ENCODE measurements at regions of chr5 and their contacts with region 1.

Region 1: DNA sequence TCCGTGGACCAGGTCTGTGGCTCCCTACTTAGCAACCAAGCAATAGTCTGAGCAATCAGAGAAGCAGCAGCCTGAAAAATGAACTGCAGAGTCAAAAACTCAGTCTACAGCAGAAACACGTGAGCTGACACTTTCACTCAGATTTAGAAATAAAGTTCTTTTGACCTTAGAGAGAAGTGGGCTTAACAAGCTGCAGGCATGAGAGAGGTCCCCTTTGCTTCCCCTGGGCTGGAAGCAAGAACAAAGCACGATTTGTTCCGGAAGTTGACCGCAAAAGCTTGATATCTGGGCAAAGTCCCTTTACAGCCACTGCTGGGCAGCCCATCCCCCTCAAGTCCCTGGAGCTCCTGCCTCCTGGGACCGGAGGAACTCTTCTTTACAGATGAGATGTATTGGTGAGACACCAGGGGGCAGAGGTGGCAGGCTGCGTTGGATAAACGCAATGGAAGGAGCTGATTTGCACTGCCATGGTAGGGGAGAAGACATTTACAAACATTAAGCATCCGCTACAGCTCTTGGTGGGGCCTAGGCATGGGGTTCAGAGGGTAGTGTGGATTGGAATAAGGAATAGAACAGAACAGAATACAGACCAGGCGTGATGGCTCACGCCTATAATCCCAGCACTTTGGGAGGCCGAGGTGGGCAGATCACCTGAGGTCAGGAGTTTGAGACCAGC is 5.8 kb upstream of the SOWAHA start:
- DNase-seq: peak; percentile 99
- ATAC-seq: peak; percentile 97
- H3K4me3 ChIP-seq: peak overlapping the region; percentile 64 to 85 (median 82)
- H3K27ac ChIP-seq: peak overlapping the region; percentile 100
- H3K4me1 ChIP-seq: peaks cover 58% of the 10 kb centered on the region
- H3K27me3 ChIP-seq: no peaks in the 10 kb centered on the region; a peak in 1 of 5 replicates
- CTCF ChIP-seq: peak; percentile 92
- EP300 ChIP-seq: peak; percentile 81 to 93
- POLR2A ChIP-seq: peak; percentile 81 to 95
- RAD21 ChIP-seq: peak; percentile 95

Region 2: DNA sequence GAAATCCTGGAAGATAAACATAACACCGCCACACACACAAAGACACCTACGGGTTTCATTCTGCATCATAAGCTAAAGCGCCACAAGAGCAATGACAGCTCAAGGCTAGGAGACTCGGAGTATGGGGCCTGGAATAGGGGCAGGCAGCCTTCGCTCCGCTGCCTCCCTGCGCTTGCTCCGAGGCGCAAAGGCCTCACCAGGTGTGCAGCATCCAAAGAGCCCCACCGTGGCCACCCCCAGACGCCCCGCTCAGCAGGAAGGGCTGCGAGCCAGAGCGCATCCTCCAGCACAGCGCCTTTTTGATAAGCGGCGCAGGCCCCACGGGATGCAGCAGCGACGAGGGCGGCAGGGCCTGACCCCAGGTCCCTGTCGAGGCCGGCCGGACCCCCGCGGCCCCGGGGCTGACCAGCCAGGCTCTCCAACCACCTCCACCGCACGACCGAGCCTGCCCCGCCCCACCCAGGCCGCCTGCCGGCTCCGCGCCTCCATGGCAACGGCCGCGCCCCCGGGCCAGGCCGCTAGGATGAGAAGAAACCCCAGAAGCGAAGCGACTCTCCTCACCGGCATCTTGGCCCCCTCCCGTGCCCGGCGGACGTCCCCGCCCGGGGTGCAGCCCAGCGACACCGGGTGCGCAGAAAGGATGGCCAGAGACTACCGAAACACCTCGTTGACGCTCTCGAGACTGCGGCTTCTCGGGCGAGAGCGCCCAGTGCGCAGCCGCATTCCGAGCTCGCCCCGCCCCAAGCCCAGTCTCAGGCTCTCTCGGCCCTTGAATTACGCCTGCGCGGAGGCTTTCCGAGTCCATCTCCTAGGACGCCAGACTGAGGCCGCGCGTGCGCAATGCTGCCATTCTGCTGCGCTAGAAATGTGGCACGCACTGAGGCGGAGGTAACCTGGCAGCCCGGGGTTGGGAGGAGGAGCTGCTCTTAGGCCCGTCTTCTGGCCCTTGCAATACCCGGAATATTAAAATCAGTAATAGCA is 70.2 kb before region 1 on chr5 and contains the start of gene KIF3A:
- CTCF ChIA-PET with region 1: no interaction called
- POLR2A ChIA-PET with region 1: interaction called, 17 read pairs
- in situ Hi-C with region 1: no loop called
- intact Hi-C with region 1: loop called (anchors 1 kb)
- DNase-seq: peak; percentile 95
- ATAC-seq: peak; percentile 95
- H3K4me3 ChIP-seq: peak within 1 kb of the TSS; percentile 73 to 89 (median 82)
- H3K27ac ChIP-seq: peak within 1 kb of the TSS; percentile 39
- H3K4me1 ChIP-seq: peaks cover 28% of the 10 kb centered on the region
- H3K27me3 ChIP-seq: no peaks in the 10 kb centered on the region
- CTCF ChIP-seq: peak; percentile 22; the same call in 1 of the 2 replicates
- EP300 ChIP-seq: no peak
- POLR2A ChIP-seq: peak; percentile 49 to 55; a peak in 3 of 4 replicates
- RAD21 ChIP-seq: no peak
- total RNA-seq, gene KIF3A: 8.4 and 11.3 TPM in 2 replicates

Region 3: DNA sequence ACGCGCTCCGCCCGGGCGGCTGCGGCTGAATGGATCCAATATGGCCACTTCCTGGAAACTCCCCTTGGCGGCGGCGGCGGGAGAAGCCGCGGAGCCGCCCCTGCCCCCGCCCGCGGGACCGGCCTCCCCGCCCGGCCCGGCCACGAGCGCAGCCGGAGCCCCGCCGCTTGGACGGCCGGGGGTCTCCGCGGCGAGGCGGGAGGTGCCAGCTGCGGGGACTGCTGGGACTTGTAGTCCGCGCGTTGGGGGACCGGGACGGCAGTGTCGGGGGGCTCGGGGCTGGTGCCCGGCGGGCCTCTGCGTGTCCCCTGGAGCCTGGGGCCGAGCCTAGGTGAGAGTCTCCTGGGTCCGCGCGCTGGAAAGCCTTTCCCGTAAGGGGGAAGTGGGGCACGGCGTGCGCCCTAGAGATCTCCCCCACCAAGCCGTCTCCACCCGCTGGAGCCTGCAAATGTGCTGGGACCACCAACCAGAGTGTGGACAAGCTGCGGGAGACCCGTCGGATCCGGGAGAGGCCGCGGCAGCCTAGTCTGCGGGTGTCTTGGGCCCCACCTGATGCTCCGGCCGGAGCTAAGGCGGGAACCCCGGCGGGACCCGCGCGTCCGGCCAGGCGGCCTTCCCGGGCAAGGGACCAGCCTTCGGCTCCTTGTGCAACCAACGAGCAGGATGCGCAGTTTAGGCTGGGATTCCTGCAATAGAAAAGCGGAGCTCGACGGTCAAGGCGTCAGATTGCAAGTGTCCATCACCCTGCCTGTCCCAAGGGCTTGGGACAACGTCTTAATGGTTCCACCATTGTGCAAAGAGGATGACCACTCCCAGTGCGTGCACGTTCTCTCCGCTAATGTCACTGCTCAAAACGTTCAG is 29.9 kb before region 1 on chr5 and contains the start of gene SEPTIN8:
- CTCF ChIA-PET with region 1: no interaction called
- POLR2A ChIA-PET with region 1: interaction called, 21 read pairs
- in situ Hi-C with region 1: no loop called
- intact Hi-C with region 1: loop called (anchors 2 kb)
- DNase-seq: no peak
- ATAC-seq: peak; percentile 60
- H3K4me3 ChIP-seq: peak within 1 kb of the TSS; percentile 66 to 93 (median 72)
- H3K27ac ChIP-seq: peak within 1 kb of the TSS; percentile 55
- H3K4me1 ChIP-seq: peaks cover 47% of the 10 kb centered on the region
- H3K27me3 ChIP-seq: no peaks in the 10 kb centered on the region
- CTCF ChIP-seq: no peak
- EP300 ChIP-seq: no peak
- POLR2A ChIP-seq: peak; percentile 21 to 65; a peak in 3 of 4 replicates
- RAD21 ChIP-seq: no peak; the same call in 1 of the 2 replicates
- total RNA-seq, gene SEPTIN8: 49.9 and 50.7 TPM in 2 replicates

Region 4: GRCh38 chr5:132820162-132820754 is 13.0 kb after region 1 on chr5:
- CTCF ChIA-PET with region 1: interaction called, 54 read pairs
- POLR2A ChIA-PET with region 1: interaction called, 176 read pairs
- in situ Hi-C with region 1: no loop called
- intact Hi-C with region 1: loop called (anchors 1 kb)
- DNase-seq: peak; percentile 88
- ATAC-seq: peak; percentile 81
- H3K4me3 ChIP-seq: peak overlapping the region; percentile 45 to 64 (median 50)
- H3K27ac ChIP-seq: peak overlapping the region; percentile 66
- H3K4me1 ChIP-seq: peaks cover 49% of the 10 kb centered on the region
- H3K27me3 ChIP-seq: no peaks in the 10 kb centered on the region
- CTCF ChIP-seq: peak; percentile 96
- EP300 ChIP-seq: peak in 1 of 2 experiments; percentile 23; a peak in 1 of 4 replicates
- POLR2A ChIP-seq: no peak
- RAD21 ChIP-seq: peak; percentile 98

Region 5: GRCh38 chr5:132839426-132840301 is 32.4 kb after region 1 on chr5:
- CTCF ChIA-PET with region 1: no interaction called
- POLR2A ChIA-PET with region 1: interaction called, 13 read pairs
- in situ Hi-C with region 1: no loop called
- intact Hi-C with region 1: no loop called
- DNase-seq: peak; percentile 89
- ATAC-seq: peak; percentile 72
- H3K4me3 ChIP-seq: peak overlapping the region; percentile 36 to 68 (median 48); a peak in 5 of 6 replicates
- H3K27ac ChIP-seq: peak overlapping the region; percentile 98
- H3K4me1 ChIP-seq: peaks cover 81% of the 10 kb centered on the region
- H3K27me3 ChIP-seq: no peaks in the 10 kb centered on the region
- CTCF ChIP-seq: peak; percentile 9; the same call in 1 of the 2 replicates
- EP300 ChIP-seq: peak; percentile 43 to 91; a peak in 2 of 4 replicates
- POLR2A ChIP-seq: peak; percentile 55 to 57; a peak in 3 of 4 replicates
- RAD21 ChIP-seq: no peak

Region 6: DNA sequence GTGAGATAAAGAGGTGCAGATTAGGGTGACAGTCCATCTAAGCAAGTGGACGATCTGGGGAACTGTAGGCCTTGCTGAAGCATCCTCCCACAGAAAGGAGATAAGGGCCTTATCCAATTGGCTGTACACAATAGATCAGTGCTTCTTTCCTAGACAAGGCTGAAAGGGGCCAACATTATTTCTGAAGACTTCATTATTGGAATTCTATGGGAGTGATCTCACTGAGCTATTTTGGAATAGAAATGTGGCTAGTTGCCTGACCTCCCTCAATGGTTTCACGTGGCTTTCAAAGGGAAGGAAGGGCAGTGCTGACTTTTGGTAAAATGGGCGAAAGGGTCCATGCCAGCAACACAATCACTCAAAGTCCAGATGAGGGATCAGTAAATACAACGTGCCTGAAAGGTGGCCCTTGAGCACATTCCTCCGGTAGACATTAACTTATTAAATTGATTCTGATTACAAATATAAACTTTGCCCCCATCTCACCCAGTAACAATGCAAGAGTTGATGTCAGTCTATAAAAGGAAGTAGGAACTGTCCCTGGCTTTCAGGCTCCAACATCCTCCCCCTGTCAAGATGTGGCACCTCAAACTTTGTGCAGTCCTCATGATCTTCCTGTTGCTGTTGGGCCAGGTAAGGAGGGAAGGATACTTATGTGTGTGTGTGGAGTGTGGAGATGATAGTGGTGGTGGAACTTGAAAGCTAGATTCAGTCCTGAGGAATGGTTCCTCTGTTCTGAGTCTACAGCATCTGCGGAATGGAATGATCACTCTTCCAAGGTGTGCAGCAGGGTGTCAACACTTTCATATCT is 66.0 kb after region 1 on chr5 and contains the start of gene LEAP2:
- CTCF ChIA-PET with region 1: interaction called, 3 read pairs
- POLR2A ChIA-PET with region 1: interaction called, 10 read pairs
- in situ Hi-C with region 1: no loop called
- intact Hi-C with region 1: no loop called
- DNase-seq: peak; percentile 95
- ATAC-seq: peak; percentile 82
- H3K4me3 ChIP-seq: peak within 1 kb of the TSS; percentile 52 to 76 (median 68)
- H3K27ac ChIP-seq: peak within 1 kb of the TSS; percentile 95
- H3K4me1 ChIP-seq: peaks cover 90% of the 10 kb centered on the region
- H3K27me3 ChIP-seq: no peaks in the 10 kb centered on the region; a peak in 1 of 5 replicates
- CTCF ChIP-seq: peak; percentile 9
- EP300 ChIP-seq: peak; percentile 43 to 90; a peak in 3 of 4 replicates
- POLR2A ChIP-seq: peak; percentile 94 to 95
- RAD21 ChIP-seq: no peak
- total RNA-seq, gene LEAP2: 19.8 and 23.9 TPM in 2 replicates

Measured in HepG2 (cell line).